Gastrocnemius medialis (tissue), 4 donors: ENCODE measurements at regions of chr14 and their contacts with region 1.

Region 1: DNA sequence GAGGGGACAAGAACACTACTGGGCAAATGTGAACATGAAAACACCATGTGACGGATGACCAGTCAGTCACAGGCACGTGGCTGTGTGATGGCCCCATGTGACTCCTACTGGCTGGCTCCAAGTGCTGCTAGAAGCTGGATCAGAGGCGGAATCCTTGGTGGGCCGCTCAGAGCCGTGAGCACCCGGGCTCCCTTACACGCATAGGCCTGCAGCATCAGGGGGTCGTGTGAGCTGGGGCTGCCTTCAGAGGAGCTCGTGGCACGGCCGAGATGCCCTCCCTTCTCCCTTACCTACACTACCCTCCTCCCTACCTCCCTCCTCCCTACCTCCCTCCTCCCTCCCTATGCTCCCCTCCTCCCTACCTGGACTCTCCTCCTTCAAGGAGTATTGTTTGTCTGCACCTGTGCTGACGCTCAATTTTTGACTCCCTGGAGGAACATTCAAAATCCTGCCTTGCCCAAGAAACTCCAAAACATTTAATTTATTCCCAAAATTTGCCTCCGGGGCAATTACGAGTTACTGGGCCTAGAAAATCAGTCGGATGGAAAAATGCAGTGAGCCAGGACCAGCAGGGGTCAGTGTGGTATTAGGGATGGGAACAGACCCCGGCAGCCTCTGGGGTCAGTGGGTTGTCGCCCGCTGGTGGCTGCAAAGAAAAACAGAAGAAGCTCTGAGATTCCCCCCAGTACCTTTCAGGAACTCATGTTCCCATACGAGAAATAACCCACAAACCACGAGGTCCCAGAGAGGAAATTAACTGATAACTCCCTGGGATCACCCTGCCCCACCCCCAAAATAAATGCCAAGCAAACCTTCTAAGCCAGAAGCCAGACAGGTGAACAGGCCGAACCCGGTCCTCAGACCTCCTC is 61.2 kb downstream of the C14orf132 start:
- DNase-seq: peak; percentile 26 to 34
- ATAC-seq: no peak
- H3K4me3 ChIP-seq: no peak overlapping the region
- H3K27ac ChIP-seq: no peak overlapping the region
- H3K4me1 ChIP-seq: no peaks in the 10 kb centered on the region
- H3K27me3 ChIP-seq: peaks cover 0 to 3% (median 0%) of the 10 kb centered on the region in 3 donors
- CTCF ChIP-seq: peak; percentile 58 to 71 (median 67)
- POLR2A ChIP-seq: no peak

Region 2: GRCh38 chr14:95993768-95994592 is 106.4 kb before region 1 on chr14:
- in situ Hi-C with region 1: no loop called
- intact Hi-C with region 1: loop called (anchors 1 kb)
- DNase-seq: no peak
- ATAC-seq: no peak
- H3K4me3 ChIP-seq: no peak overlapping the region
- H3K27ac ChIP-seq: no peak overlapping the region
- H3K4me1 ChIP-seq: no peaks in the 10 kb centered on the region
- H3K27me3 ChIP-seq: peaks cover 0 to 8% (median 8%) of the 10 kb centered on the region in 3 donors
- CTCF ChIP-seq: peak in 4 of 5 experiments; percentile 37 to 61 (median 44)
- POLR2A ChIP-seq: no peak

Region 3: GRCh38 chr14:96038920-96039632 is 61.3 kb before region 1 on chr14 and contains the start of gene C14orf132:
- in situ Hi-C with region 1: no loop called
- intact Hi-C with region 1: loop called (anchors 10 kb)
- DNase-seq: peak in 1 of 2 donors; percentile 33
- ATAC-seq: peak; percentile 67 to 78
- H3K4me3 ChIP-seq: peak within 1 kb of the TSS; percentile 51 to 71 (median 65)
- H3K27ac ChIP-seq: peak within 1 kb of the TSS; percentile 21 to 77 (median 44)
- H3K4me1 ChIP-seq: peaks cover 0 to 11% of the 10 kb centered on the region in 2 donors
- H3K27me3 ChIP-seq: peaks cover 23 to 33% (median 32%) of the 10 kb centered on the region in 3 donors
- CTCF ChIP-seq: no peak
- POLR2A ChIP-seq: peak; percentile 41 to 45
- total RNA-seq, gene C14orf132: 1.1 to 2.9 (median 1.5) TPM

Region 4: GRCh38 chr14:96056509-96057422 is 43.6 kb before region 1 on chr14:
- in situ Hi-C with region 1: no loop called
- intact Hi-C with region 1: loop called (anchors 5 kb)
- DNase-seq: no peak
- ATAC-seq: no peak
- H3K4me3 ChIP-seq: no peak overlapping the region
- H3K27ac ChIP-seq: no peak overlapping the region
- H3K4me1 ChIP-seq: peaks cover 0 to 5% of the 10 kb centered on the region in 2 donors
- H3K27me3 ChIP-seq: peaks cover 0 to 10% (median 0%) of the 10 kb centered on the region in 3 donors
- CTCF ChIP-seq: no peak
- POLR2A ChIP-seq: no peak

Region 5: DNA sequence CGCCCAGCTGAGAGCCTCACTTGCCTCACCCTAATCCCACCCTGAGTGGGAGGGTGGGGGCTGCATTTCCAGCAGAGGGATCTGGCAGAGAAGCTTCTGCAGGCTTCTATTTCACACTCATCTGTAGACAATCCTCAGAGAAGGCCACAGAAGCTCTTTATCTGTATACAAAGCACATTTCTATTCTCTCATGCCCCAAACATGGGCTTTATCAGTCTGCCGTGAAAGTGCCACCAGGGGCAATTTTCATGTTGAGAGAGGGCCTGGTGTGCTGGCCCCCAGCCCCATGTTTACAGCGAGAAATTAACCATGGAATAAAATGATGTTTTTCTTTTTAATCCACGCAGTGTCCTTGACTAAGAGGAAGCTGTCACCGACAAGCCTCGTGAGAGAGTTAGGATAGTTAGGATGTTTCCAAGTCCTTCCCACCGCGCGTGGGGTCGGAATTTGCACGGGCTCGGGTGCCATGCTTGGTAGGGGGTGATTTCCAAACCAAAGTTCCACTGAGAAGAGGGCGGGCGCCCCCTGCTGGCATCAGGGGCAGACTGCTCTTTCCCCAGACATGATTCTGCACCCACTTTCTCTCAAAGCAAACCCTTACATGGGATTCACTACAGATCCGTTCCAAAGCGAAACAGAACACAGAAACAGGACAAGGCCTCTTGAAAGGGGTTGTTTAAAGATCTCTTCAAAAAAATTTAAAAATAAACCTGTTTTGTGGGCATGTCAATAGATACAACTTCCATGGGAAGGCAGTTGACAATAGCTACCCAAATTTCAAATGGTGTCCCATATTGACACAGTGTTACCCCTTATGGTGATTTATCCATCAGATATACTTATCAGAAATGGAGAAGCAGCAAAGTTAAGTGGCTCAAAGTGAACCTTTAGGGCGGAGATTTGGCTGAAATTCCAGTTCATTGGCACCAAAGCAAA is 175.1 kb after region 1 on chr14:
- in situ Hi-C with region 1: loop called in 3 of 4 experiments (anchors 5 to 10 kb)
- intact Hi-C with region 1: loop called (anchors 1 kb)
- DNase-seq: peak; percentile 20 to 24
- ATAC-seq: peak in 1 of 2 donors; percentile 32
- H3K4me3 ChIP-seq: no peak overlapping the region
- H3K27ac ChIP-seq: no peak overlapping the region
- H3K4me1 ChIP-seq: no peaks in the 10 kb centered on the region
- H3K27me3 ChIP-seq: no peaks in the 10 kb centered on the region
- CTCF ChIP-seq: peak; percentile 69 to 86 (median 83)
- POLR2A ChIP-seq: no peak

Region 6: GRCh38 chr14:96424109-96424989 is 324.0 kb after region 1 on chr14:
- in situ Hi-C with region 1: loop called in 2 of 4 experiments (anchors 25 kb)
- intact Hi-C with region 1: loop called (anchors 5 kb)
- DNase-seq: no peak
- ATAC-seq: peak; percentile 84 to 89
- H3K4me3 ChIP-seq: peak overlapping the region; percentile 27 to 51 (median 42)
- H3K27ac ChIP-seq: no peak overlapping the region
- H3K4me1 ChIP-seq: no peaks in the 10 kb centered on the region
- H3K27me3 ChIP-seq: no peaks in the 10 kb centered on the region
- CTCF ChIP-seq: peak; percentile 60 to 82 (median 73)
- POLR2A ChIP-seq: no peak

Region 7: GRCh38 chr14:96445844-96446710 is 345.7 kb after region 1 on chr14:
- in situ Hi-C with region 1: loop called in 1 of 4 experiments (anchors 25 kb)
- intact Hi-C with region 1: no loop called
- DNase-seq: no peak
- ATAC-seq: no peak
- H3K4me3 ChIP-seq: no peak overlapping the region
- H3K27ac ChIP-seq: no peak overlapping the region
- H3K4me1 ChIP-seq: no peaks in the 10 kb centered on the region
- H3K27me3 ChIP-seq: no peaks in the 10 kb centered on the region
- CTCF ChIP-seq: no peak
- POLR2A ChIP-seq: no peak